PC-9 (cell line): ENCODE measurements at regions of chr6 and their contacts with region 1.

Region 1: DNA sequence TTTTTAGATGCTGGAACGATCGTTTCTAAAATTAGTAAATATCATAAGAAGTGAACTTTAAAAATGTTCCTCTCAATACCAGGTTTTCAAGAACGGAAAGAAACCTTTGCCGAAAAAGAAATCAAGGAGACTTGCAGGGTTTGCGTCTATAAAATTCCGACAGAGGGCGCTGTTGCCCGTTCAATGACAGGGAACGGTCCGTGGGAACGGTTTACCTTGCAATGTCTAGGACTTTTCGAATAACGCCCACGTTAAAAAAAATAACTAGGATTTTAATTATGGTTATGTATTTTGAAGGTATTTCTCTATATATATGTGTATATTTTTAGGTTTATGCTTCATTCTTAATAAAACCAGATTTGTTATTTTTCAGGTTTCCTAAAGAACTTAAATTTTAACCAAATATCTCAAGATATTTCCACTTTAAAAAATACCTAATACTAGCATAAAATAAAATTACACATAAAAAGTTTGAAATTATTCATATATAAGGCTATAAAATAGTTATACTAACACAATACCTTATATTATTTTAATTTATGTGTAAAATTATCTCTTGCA is 2.5 kb upstream of the TFAP2B start:
- DNase-seq: peak; percentile 48 to 53
- H3K4me3 ChIP-seq: peak overlapping the region; percentile 57
- H3K27ac ChIP-seq: no peak overlapping the region
- H3K4me1 ChIP-seq: no peaks in the 10 kb centered on the region
- H3K27me3 ChIP-seq: peaks cover 9% of the 10 kb centered on the region; the same call in 1 of the 2 replicates
- CTCF ChIP-seq: peak; percentile 85

Region 2: DNA sequence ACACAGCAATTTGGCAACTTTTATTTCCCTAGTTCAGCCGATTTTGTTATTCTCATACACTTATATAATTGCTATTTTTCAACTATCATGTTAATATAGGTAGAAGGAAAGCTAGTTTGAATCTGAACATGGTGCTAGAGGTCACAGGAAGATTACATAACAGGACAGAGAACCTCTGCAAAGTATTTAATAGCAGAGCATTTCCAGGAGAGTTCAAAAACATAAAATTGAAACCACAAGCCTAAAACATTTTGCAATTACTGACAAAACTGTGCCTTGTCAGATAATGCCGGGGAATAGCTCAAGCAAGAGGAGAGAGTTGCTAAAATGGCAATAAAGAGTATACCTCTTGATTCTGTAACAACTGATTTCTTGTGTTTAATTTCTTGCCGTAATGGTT is 73.3 kb after region 1 on chr6:
- CTCF ChIA-PET with region 1: no interaction called
- POLR2A ChIA-PET with region 1: no interaction called
- intact Hi-C with region 1: no loop called
- DNase-seq: no peak
- H3K4me3 ChIP-seq: no peak overlapping the region
- H3K27ac ChIP-seq: no peak overlapping the region
- H3K4me1 ChIP-seq: no peaks in the 10 kb centered on the region
- H3K27me3 ChIP-seq: no peaks in the 10 kb centered on the region
- CTCF ChIP-seq: no peak

Region 3: DNA sequence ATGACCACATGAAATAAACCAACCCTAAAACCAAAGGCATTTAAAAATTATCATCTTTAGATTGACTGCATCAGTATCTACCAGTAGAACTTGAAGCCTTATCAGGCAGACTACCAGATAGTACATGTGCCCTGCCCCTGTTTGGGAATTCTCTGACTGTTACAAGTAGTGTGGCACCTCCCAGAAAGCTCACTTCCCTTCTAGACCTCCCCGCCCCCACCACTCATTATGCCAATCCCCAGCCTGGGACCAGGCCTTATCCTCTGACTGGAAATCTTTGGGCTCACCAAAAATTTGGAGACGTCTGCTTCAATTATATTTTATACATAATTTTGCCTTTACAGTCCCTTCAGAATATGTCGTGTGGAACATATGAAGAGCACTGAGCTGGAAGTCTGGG is 158.1 kb after region 1 on chr6:
- CTCF ChIA-PET with region 1: no interaction called
- POLR2A ChIA-PET with region 1: interaction called, 10 read pairs
- intact Hi-C with region 1: no loop called
- DNase-seq: no peak
- H3K4me3 ChIP-seq: no peak overlapping the region
- H3K27ac ChIP-seq: no peak overlapping the region
- H3K4me1 ChIP-seq: no peaks in the 10 kb centered on the region
- H3K27me3 ChIP-seq: no peaks in the 10 kb centered on the region
- CTCF ChIP-seq: no peak

Region 4: GRCh38 chr6:50990750-50991446 is 174.7 kb after region 1 on chr6:
- CTCF ChIA-PET with region 1: no interaction called
- POLR2A ChIA-PET with region 1: no interaction called
- intact Hi-C with region 1: no loop called
- DNase-seq: no peak
- H3K4me3 ChIP-seq: no peak overlapping the region
- H3K27ac ChIP-seq: no peak overlapping the region
- H3K4me1 ChIP-seq: no peaks in the 10 kb centered on the region
- H3K27me3 ChIP-seq: no peaks in the 10 kb centered on the region
- CTCF ChIP-seq: no peak

Region 5: DNA sequence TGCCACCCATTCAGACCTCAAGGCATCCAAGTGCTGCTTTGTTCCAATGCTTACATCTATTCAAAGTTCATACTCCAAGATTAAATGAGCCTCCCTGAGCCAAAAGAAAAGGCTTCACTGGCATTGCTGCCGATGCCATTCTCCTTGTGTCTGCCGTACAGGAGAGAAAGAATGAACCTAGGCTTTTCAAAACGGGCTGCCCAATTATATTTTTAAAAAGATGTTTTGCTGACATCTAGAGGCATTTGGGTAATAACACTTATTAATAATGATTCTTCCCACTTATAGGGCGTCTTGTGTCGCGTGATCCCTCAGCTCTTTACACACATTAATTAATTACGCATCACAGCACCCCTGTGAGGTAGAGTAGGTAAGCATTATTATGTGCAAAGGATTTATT is 725.7 kb after region 1 on chr6:
- CTCF ChIA-PET with region 1: no interaction called
- POLR2A ChIA-PET with region 1: no interaction called
- intact Hi-C with region 1: loop called (anchors 10 kb)
- DNase-seq: peak in 1 of 2 experiments; percentile 40
- H3K4me3 ChIP-seq: no peak overlapping the region
- H3K27ac ChIP-seq: no peak overlapping the region
- H3K4me1 ChIP-seq: no peaks in the 10 kb centered on the region
- H3K27me3 ChIP-seq: no peaks in the 10 kb centered on the region
- CTCF ChIP-seq: peak; percentile 33; the same call in 1 of the 2 replicates

Region 6: GRCh38 chr6:51753635-51754034 is 937.4 kb after region 1 on chr6:
- CTCF ChIA-PET with region 1: no interaction called
- POLR2A ChIA-PET with region 1: no interaction called
- intact Hi-C with region 1: loop called (anchors 10 kb)
- DNase-seq: peak in 1 of 2 experiments; percentile 0
- H3K4me3 ChIP-seq: no peak overlapping the region
- H3K27ac ChIP-seq: no peak overlapping the region
- H3K4me1 ChIP-seq: no peaks in the 10 kb centered on the region
- H3K27me3 ChIP-seq: no peaks in the 10 kb centered on the region
- CTCF ChIP-seq: peak; percentile 37; the same call in 1 of the 2 replicates

Region 7: DNA sequence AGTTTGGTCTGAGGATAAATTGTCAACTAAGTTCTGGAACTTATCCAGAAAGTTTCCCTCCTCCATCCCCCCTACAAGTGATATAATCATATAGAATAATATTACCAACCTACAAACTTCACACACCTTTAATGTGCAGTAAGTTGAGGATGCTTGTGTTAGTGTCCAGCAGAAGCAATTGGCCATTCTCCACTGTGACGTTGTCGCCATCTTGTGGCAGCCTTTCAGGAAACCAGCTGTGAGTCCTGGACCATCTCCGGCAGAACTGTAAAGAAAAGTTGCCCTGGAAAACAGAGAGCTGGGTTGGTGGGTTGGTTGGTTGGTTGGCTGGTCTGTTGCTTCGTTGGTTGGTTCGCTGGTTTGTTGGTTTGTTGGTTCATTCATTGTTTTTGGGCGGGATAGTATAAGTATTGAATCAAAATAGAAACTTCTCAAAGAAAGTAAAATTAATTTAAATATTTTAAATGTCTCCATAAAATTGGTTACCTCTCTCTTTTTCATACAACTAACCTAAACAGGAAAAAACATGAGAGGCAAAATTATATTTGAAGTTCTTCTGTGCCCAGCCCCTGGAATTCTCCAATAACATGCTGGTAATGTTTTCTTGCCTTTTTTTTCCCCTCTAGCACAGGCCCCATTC is 1143.7 kb after region 1 on chr6:
- CTCF ChIA-PET with region 1: no interaction called
- POLR2A ChIA-PET with region 1: no interaction called
- intact Hi-C with region 1: loop called (anchors 1 kb)
- DNase-seq: peak in 1 of 2 experiments; percentile 47
- H3K4me3 ChIP-seq: no peak overlapping the region
- H3K27ac ChIP-seq: no peak overlapping the region
- H3K4me1 ChIP-seq: no peaks in the 10 kb centered on the region
- H3K27me3 ChIP-seq: no peaks in the 10 kb centered on the region
- CTCF ChIP-seq: peak; percentile 80

Region 8: DNA sequence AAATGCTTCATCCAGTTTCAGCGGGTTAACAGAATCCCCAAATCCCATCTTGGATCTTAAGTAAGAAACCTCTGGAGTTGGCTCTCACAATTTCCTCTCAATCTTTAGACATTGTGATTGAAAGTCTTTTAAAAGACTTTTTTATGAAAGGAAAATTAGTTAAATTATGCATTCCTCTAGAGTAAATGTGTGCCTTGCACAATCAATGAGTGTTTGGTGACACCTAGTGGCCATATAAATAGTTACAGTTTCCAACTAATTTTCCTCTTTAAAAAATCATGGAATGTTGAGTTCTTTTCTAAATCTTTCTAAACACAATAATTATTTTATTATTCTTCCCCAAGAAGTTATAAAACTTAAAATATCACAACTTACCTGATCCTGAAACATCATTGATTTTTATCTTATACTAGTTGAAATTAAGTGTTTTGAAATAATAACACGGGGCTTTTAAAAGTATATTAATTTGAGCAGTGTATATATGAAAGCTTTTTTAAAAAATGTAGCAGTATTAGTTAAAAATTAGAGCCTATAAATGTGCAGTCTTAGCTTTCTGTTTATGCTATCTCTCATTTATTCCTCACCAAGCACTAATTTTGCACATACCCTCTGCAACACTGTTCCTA is 1204.9 kb after region 1 on chr6:
- CTCF ChIA-PET with region 1: no interaction called
- POLR2A ChIA-PET with region 1: no interaction called
- intact Hi-C with region 1: loop called (anchors 2 kb)
- DNase-seq: no peak
- H3K4me3 ChIP-seq: no peak overlapping the region
- H3K27ac ChIP-seq: no peak overlapping the region
- H3K4me1 ChIP-seq: no peaks in the 10 kb centered on the region
- H3K27me3 ChIP-seq: 0 out of 2 replicates have a peak, but pooled peaks cover 13% of the 10 kb centered on the region
- CTCF ChIP-seq: peak; percentile 91